Panc1 (cell line): ENCODE measurements at regions of chr1 and their contacts with region 1.

Region 1: GRCh38 chr1:28482138-28482537 is 23.7 kb upstream of the RCC1 start:
- DNase-seq: no peak
- ATAC-seq: no peak
- H3K4me3 ChIP-seq: no peak overlapping the region
- H3K27ac ChIP-seq: no peak overlapping the region
- H3K4me1 ChIP-seq: no peaks in the 10 kb centered on the region
- H3K27me3 ChIP-seq: no peaks in the 10 kb centered on the region
- CTCF ChIP-seq: no peak

Region 2: GRCh38 chr1:28417429-28417922 is 64.7 kb before region 1 on chr1:
- CTCF ChIA-PET with region 1: no interaction called
- POLR2A ChIA-PET with region 1: no interaction called
- in situ Hi-C with region 1: no loop called
- intact Hi-C with region 1: no loop called
- DNase-seq: peak; percentile 85
- ATAC-seq: peak; percentile 79
- H3K4me3 ChIP-seq: no peak overlapping the region
- H3K27ac ChIP-seq: peak overlapping the region; percentile 29; the same call in 1 of the 2 replicates
- H3K4me1 ChIP-seq: peaks cover 8% of the 10 kb centered on the region; the same call in 1 of the 2 replicates
- H3K27me3 ChIP-seq: no peaks in the 10 kb centered on the region
- CTCF ChIP-seq: no peak

Region 3: GRCh38 chr1:28447679-28448078 is 34.5 kb before region 1 on chr1:
- CTCF ChIA-PET with region 1: no interaction called
- POLR2A ChIA-PET with region 1: no interaction called
- in situ Hi-C with region 1: no loop called
- intact Hi-C with region 1: no loop called
- DNase-seq: no peak
- ATAC-seq: no peak
- H3K4me3 ChIP-seq: no peak overlapping the region
- H3K27ac ChIP-seq: no peak overlapping the region
- H3K4me1 ChIP-seq: no peaks in the 10 kb centered on the region
- H3K27me3 ChIP-seq: no peaks in the 10 kb centered on the region
- CTCF ChIP-seq: no peak

Region 4: GRCh38 chr1:28470146-28470545 is 12.0 kb before region 1 on chr1:
- CTCF ChIA-PET with region 1: interaction called, 11 read pairs
- POLR2A ChIA-PET with region 1: no interaction called
- in situ Hi-C with region 1: no loop called
- intact Hi-C with region 1: no loop called
- DNase-seq: no peak
- ATAC-seq: no peak
- H3K4me3 ChIP-seq: no peak overlapping the region
- H3K27ac ChIP-seq: no peak overlapping the region
- H3K4me1 ChIP-seq: no peaks in the 10 kb centered on the region
- H3K27me3 ChIP-seq: no peaks in the 10 kb centered on the region
- CTCF ChIP-seq: no peak

Region 5: DNA sequence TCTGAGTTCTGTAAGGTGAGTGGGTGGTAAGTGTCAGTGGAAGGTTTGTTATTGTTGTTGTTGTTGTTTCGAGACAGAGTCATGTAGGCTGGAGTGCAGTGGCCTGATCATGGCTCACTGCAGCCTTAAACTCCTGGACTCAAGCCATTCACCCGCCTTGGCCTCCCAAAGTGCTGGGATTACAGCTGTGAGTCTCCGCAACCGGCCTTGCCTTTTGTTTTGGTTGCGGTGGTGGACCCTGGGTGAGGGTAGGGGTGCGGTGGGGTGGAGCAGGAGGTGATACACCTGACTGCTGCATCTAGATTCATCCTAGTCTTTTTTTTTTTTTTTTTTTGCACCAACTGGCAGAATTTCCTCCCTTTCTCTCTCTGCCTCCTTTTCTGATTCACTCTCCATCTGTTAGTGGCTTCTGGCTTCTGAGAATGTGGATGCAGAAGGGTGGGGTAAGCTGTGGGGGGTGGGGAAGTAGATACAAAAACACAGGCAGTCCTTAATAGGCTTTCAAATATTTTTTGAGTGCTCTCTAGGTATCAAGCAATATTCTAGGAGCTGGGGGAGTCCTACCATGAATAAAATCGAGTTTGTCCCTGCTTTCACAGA is 181.8 kb after region 1 on chr1:
- CTCF ChIA-PET with region 1: no interaction called
- POLR2A ChIA-PET with region 1: no interaction called
- in situ Hi-C with region 1: no loop called
- intact Hi-C with region 1: no loop called
- DNase-seq: no peak
- ATAC-seq: no peak
- H3K4me3 ChIP-seq: no peak overlapping the region
- H3K27ac ChIP-seq: no peak overlapping the region
- H3K4me1 ChIP-seq: peaks cover 7% of the 10 kb centered on the region
- H3K27me3 ChIP-seq: no peaks in the 10 kb centered on the region
- CTCF ChIP-seq: no peak